ENCODE measurements at regions of chr13 and their contacts with region 1.

Region 1: GRCh38 chr13:99200432-99201167 is at the start of gene UBAC2:
- DNase-seq: peak; percentile 98
- ATAC-seq: peak; percentile 74
- H3K4me3 Mint-ChIP-seq: peak within 1 kb of the TSS; percentile 95
- H3K27ac Mint-ChIP-seq: peak within 1 kb of the TSS; percentile 94
- H3K4me1 Mint-ChIP-seq: peaks cover 59% of the 10 kb centered on the region
- H3K27me3 Mint-ChIP-seq: no peaks in the 10 kb centered on the region
- CTCF ChIP-seq: no peak
- total RNA-seq, gene UBAC2: 40.6 and 51.0 TPM in 2 replicates

Region 2: GRCh38 chr13:98576963-98577822 is 623.4 kb before region 1 on chr13 and contains the start of gene STK24:
- CTCF ChIA-PET with region 1: no interaction called
- POLR2A ChIA-PET with region 1: no interaction called
- intact Hi-C with region 1: loop called (anchors 10 kb)
- DNase-seq: peak; percentile 82
- ATAC-seq: peak; percentile 78
- H3K4me3 Mint-ChIP-seq: peak within 1 kb of the TSS; percentile 88
- H3K27ac Mint-ChIP-seq: peak within 1 kb of the TSS; percentile 91
- H3K4me1 Mint-ChIP-seq: peaks cover 45% of the 10 kb centered on the region
- H3K27me3 Mint-ChIP-seq: no peaks in the 10 kb centered on the region
- CTCF ChIP-seq: no peak
- total RNA-seq, gene STK24: 74.8 and 84.8 TPM in 2 replicates

Region 3: DNA sequence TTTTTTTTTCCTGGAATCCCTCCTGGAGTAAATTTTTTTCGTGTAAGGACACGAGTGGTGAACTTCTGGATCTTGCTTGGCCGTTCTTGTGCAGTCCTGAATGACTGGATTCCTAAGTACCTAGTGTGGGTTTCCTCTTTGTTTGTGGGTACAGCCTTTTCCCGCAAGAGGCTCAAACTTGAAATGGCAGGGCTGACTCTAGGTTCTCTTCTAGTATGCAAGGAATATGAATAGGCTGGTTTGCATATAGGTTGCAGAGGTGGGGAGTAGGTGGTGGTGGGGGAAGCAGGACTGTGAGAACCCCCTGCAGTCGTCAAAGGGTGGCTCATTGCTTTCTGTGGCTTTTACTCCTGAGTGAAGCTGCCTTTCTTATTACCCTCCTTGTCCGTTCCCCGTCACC is 13.6 kb after region 1 on chr13:
- CTCF ChIA-PET with region 1: interaction called, 3 read pairs
- POLR2A ChIA-PET with region 1: interaction called, 12 read pairs
- intact Hi-C with region 1: loop called (anchors 1 kb)
- DNase-seq: no peak
- ATAC-seq: peak; percentile 83
- H3K4me3 Mint-ChIP-seq: peak overlapping the region; percentile 49
- H3K27ac Mint-ChIP-seq: peak overlapping the region; percentile 81
- H3K4me1 Mint-ChIP-seq: peaks cover 57% of the 10 kb centered on the region
- H3K27me3 Mint-ChIP-seq: no peaks in the 10 kb centered on the region
- CTCF ChIP-seq: no peak

Region 4: GRCh38 chr13:99237981-99238662 is 37.5 kb after region 1 on chr13:
- CTCF ChIA-PET with region 1: no interaction called
- POLR2A ChIA-PET with region 1: interaction called, 57 read pairs
- intact Hi-C with region 1: loop called (anchors 1 kb)
- DNase-seq: no peak
- ATAC-seq: peak; percentile 74
- H3K4me3 Mint-ChIP-seq: peak overlapping the region; percentile 72
- H3K27ac Mint-ChIP-seq: peak overlapping the region; percentile 84
- H3K4me1 Mint-ChIP-seq: peaks cover 62% of the 10 kb centered on the region
- H3K27me3 Mint-ChIP-seq: no peaks in the 10 kb centered on the region
- CTCF ChIP-seq: no peak

Region 5: DNA sequence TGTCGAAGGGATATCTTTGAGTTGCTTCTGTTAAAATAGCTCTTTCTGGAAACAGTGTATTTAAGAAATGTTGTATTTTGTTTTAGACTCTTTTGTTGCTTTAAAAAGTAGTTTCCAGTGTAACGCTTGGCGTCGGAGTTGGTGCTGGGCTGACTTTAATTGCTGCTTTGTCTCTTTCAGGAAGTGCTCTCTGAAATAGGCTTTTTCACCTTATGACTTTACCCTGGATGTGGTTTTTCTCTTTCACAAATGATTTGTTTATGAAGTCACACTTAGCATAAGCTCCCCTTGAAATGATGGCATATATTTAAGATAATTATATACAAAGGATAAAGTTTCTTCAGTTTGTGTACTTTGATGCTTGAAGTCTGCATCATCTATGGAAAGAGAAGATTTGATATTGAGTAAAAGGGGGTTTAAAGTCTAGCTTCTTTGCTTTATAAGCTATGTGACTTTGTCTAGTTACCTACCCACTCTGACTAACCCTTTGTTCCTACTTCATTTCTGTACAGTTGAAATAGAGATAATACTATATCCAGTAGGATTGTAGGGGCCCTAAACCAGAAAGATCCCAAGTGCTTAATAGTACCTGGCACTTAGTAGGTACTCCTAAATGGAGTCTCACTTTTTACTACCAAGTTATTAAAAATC is 57.7 kb after region 1 on chr13 and contains the start of gene GPR18:
- CTCF ChIA-PET with region 1: interaction called, 157 read pairs
- POLR2A ChIA-PET with region 1: interaction called, 128 read pairs
- intact Hi-C with region 1: loop called (anchors 1 kb)
- DNase-seq: no peak
- ATAC-seq: peak; percentile 65
- H3K4me3 Mint-ChIP-seq: peak within 1 kb of the TSS; percentile 94
- H3K27ac Mint-ChIP-seq: peak within 1 kb of the TSS; percentile 96
- H3K4me1 Mint-ChIP-seq: peaks cover 86% of the 10 kb centered on the region
- H3K27me3 Mint-ChIP-seq: no peaks in the 10 kb centered on the region
- CTCF ChIP-seq: no peak
- total RNA-seq, gene GPR18: 29.0 and 32.4 TPM in 2 replicates

Region 6: GRCh38 chr13:99356158-99357091 is 155.8 kb after region 1 on chr13:
- CTCF ChIA-PET with region 1: no interaction called
- POLR2A ChIA-PET with region 1: interaction called, 4 read pairs
- intact Hi-C with region 1: loop called (anchors 5 kb)
- DNase-seq: peak; percentile 40
- ATAC-seq: peak; percentile 49
- H3K4me3 Mint-ChIP-seq: peak overlapping the region; percentile 70
- H3K27ac Mint-ChIP-seq: peak overlapping the region; percentile 94
- H3K4me1 Mint-ChIP-seq: peaks cover 97% of the 10 kb centered on the region
- H3K27me3 Mint-ChIP-seq: no peaks in the 10 kb centered on the region
- CTCF ChIP-seq: no peak

Region 7: GRCh38 chr13:99436686-99437416 is 236.3 kb after region 1 on chr13:
- CTCF ChIA-PET with region 1: no interaction called
- POLR2A ChIA-PET with region 1: interaction called, 4 read pairs
- intact Hi-C with region 1: loop called (anchors 1 kb)
- DNase-seq: peak; percentile 87
- ATAC-seq: peak; percentile 59
- H3K4me3 Mint-ChIP-seq: peak overlapping the region; percentile 66
- H3K27ac Mint-ChIP-seq: peak overlapping the region; percentile 76
- H3K4me1 Mint-ChIP-seq: peaks cover 66% of the 10 kb centered on the region
- H3K27me3 Mint-ChIP-seq: peaks cover 2% of the 10 kb centered on the region
- CTCF ChIP-seq: peak; percentile 99